ENCODE measurements at regions of chr6 and their contacts with region 1.

Region 1: DNA sequence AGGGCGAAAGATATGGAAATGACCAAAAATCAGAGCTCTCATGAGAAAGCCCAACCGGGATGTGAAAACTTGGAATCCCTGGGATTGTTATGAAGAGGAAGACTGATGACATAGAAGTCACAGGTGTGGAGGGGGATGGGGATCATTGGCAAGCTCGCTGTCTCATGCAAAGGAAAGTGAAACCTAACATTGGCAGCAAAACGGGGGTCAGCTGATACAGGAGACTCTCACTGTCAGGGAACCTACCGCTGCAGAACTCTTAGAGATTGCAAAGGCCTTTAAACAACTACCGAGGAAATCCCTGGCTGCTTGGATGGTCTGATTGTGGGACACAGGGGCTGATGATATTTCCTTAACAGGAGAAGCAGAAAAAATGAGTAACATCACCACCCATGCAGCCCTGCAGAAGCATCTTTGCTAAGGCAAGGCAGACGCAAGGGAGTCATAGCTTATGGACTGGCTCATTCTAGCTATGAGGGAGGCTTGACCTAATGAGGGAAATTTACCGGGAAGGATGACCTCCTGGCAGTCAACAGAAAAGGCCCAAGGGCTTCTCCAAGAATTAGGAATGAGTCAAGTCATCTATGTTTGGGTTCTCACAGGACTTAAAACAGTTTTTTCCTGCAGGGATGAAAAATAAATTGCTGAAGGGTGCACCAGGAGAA is 7.0 kb downstream of the MUC21 start:
- DNase-seq: no peak
- ATAC-seq: no peak

Region 2: GRCh38 chr6:31049518-31049917 is 59.0 kb after region 1 on chr6:
- intact Hi-C with region 1: loop called (anchors 5 kb)
- DNase-seq: no peak
- ATAC-seq: no peak

Region 3: GRCh38 chr6:31791324-31792089 is 801.0 kb after region 1 on chr6:
- intact Hi-C with region 1: no loop called
- DNase-seq: no peak
- ATAC-seq: no peak

Measured in sciatic nerve (tissue), 2 donors.